ENCODE measurements at regions of chr18 and their contacts with region 1.

Region 1: DNA sequence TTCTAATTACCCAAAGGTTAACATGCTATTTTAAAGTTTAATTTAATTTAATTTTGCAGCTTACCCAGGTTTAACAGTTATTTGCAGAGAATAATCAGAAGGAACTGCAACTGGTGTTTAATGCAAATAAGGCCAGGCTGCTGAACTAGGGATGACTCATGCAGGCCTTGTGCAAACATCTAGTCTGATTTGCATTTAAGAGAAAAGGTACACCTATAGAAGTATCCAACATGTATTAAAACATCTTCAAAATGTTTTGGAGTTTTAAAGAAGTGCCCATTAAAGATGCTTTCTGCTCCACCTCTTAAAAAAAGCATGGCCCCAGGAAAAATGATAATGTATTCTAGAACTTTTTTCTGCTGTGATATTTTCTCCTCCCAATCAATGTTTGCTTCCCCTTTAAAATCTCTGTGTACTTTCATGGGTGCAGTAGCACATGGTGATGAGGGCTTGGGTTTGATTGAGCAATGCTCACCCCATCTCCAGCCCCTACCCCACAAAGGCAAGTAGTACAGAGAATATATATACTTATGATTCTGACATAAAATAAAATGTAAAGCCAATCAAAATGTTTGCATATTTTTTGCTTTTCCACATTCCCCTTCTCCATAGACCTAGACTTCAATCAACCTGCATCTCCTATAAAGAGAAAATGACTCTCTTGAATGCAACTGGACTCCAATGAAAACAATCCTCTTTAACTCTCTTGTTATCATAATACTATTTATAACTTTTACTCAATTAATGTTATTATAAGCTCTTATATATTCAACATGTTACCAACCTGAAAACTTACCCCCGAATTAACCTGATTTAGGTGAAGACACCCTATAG is 54.1 kb downstream of the ATP8B1 start:
- DNase-seq: no peak
- H3K4me3 ChIP-seq: no peak overlapping the region
- H3K27ac ChIP-seq: peak overlapping the region; percentile 67 to 73 (median 68)
- H3K4me1 ChIP-seq: peaks cover 21 to 77% (median 60%) of the 10 kb centered on the region in 4 donors
- H3K27me3 ChIP-seq: no peaks in the 10 kb centered on the region
- CTCF ChIP-seq: no peak
- EP300 ChIP-seq: no peak
- POLR2A ChIP-seq: no peak

Region 2: DNA sequence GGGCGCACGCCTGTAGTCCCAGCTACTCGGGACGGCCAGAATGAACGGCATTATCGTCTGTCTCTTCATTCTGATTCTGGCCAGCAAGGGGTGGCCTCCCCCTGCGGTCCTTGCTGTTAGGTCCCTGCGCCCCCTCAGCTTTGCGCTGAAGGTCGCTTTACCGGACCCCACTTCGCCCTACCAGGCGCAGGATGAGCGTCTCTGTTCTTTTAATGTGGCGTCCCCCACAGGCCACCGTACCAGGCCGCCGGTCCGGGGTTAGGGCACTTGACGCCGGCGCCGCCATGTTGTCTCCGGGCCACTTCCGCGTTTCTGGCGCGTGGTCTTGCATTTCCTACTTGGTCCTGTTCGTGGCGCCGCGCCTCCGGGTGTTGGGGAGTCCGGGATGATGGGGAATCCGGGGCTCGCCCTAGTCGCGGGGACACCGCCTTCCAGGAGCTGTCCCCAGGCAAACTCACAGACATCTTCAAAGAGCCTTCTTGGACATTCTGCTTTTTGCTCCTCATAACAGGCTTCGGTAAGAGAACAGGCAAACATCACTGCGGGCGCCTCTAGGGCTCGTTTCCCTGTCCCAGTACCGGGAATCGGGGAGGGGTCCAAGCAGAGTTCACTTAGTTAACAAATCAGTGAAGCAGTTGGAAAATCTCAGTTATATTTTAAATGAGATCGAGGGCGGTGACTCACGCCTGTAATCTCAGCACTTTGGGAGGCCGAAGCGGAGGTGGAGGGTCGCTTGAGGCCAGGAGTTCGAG is 118.8 kb before region 1 on chr18:
- in situ Hi-C with region 1: loop called in 1 of 4 experiments (anchors 25 kb)
- intact Hi-C with region 1: no loop called
- DNase-seq: peak; percentile 98
- H3K4me3 ChIP-seq: peak overlapping the region; percentile 50 to 70 (median 61)
- H3K27ac ChIP-seq: peak overlapping the region; percentile 79 to 88 (median 85)
- H3K4me1 ChIP-seq: peaks cover 0 to 25% (median 7%) of the 10 kb centered on the region in 4 donors
- H3K27me3 ChIP-seq: no peaks in the 10 kb centered on the region
- CTCF ChIP-seq: peak; percentile 59 to 82 (median 74)
- EP300 ChIP-seq: no peak
- POLR2A ChIP-seq: no peak

Region 3: DNA sequence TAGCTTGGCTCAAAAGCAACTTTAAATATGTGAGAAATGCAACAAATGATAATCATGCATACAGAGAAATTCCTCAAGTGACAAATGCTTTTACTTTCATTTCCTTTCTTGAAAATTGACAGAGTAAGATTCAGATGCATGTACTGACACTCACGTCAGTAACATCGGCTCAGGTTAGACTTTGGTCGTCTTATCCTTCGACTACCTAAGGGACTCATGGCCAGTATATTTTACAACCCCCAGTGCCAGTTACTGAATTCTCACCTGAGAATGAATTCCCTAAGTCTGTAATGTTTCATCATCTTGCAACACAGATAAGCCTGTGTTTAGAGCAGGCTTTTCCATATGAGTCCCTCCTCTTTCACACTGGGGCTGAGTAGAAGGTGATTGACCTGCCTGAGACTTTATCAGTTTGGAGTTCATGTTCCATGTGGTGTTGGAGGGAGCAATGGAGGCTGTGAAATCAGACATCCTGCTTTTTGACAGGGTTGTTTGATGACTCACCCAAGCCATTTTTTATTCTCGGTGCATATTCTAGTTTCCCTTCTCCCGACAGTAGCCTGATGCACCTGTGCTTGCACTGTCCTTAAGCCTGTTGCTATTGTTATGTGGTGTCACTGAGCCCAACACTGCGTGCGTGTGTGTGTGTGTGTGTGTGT is 84.6 kb after region 1 on chr18:
- in situ Hi-C with region 1: loop called in 1 of 4 experiments (anchors 25 kb)
- intact Hi-C with region 1: no loop called
- DNase-seq: no peak
- H3K4me3 ChIP-seq: peak overlapping the region in 1 of 4 donors; percentile 10
- H3K27ac ChIP-seq: peak overlapping the region; percentile 19 to 54 (median 28)
- H3K4me1 ChIP-seq: peaks cover 0 to 4% (median 0%) of the 10 kb centered on the region in 4 donors
- H3K27me3 ChIP-seq: no peaks in the 10 kb centered on the region
- CTCF ChIP-seq: no peak
- EP300 ChIP-seq: no peak
- POLR2A ChIP-seq: no peak